ENCODE measurements at regions of chr4 and their contacts with region 1.

Region 1: GRCh38 chr4:52861879-52862616 is at the start of gene RASL11B:
- DNase-seq: peak; percentile 91
- ATAC-seq: peak; percentile 99
- H3K4me3 Mint-ChIP-seq: peak within 1 kb of the TSS; percentile 82
- H3K27ac Mint-ChIP-seq: no peak within 1 kb of the TSS
- H3K4me1 Mint-ChIP-seq: peaks cover 16% of the 10 kb centered on the region
- H3K27me3 Mint-ChIP-seq: peaks cover 38% of the 10 kb centered on the region
- CTCF ChIP-seq: no peak
- total RNA-seq, gene RASL11B: 0.69 TPM in 1 of 2 replicates, not detected in the other

Region 2: DNA sequence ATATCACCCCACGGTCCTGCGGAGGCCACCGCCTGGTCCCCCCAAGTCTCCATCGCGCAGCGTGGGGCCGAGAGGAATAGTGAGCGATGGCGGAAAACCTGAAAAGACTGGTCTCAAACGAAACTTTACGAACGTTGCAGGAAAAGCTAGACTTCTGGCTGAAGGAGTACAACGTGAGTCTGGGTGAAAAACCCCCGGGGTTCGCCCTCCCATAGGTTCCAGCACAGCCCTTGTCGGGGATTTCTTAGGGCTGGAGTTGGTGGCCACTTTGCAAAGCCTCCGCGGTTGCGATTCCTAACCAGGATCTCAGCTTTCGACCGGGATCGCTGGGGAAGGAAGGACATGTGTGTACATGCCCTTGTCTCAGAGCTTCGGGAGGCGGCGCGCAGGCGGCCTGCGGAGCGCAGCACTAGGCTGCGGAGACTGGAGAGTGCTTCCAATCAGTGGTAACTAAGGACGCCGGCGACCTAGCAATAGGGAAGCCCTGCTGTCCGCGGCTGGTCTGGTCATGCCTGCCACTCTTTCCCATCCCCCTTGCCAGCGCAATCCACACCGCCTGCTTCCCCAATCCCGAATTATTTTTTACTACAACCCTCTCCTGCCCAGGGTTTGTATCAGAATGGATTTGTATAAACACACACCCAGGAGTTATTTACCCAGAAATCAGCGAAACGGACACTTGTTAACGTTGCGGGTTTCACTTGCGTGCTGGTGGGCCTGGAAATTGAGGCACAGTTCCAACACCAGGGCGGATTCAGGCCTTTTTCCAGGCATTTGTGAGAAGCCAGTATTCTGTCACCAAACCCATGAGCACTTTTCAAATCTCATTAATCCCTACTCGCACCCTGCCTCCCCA is 810.2 kb before region 1 on chr4:
- CTCF ChIA-PET with region 1: no interaction called
- POLR2A ChIA-PET with region 1: no interaction called
- intact Hi-C with region 1: loop called (anchors 5 kb)
- DNase-seq: peak; percentile 31
- ATAC-seq: peak; percentile 43
- H3K4me3 Mint-ChIP-seq: peak overlapping the region; percentile 88
- H3K27ac Mint-ChIP-seq: peak overlapping the region; percentile 51
- H3K4me1 Mint-ChIP-seq: peaks cover 26% of the 10 kb centered on the region
- H3K27me3 Mint-ChIP-seq: peaks cover 36% of the 10 kb centered on the region
- CTCF ChIP-seq: no peak

Region 3: GRCh38 chr4:52659001-52659721 is 202.9 kb before region 1 on chr4 and contains the start of gene USP46:
- CTCF ChIA-PET with region 1: no interaction called
- POLR2A ChIA-PET with region 1: no interaction called
- intact Hi-C with region 1: loop called (anchors 2 kb)
- DNase-seq: peak; percentile 62
- ATAC-seq: peak; percentile 87
- H3K4me3 Mint-ChIP-seq: peak within 1 kb of the TSS; percentile 88
- H3K27ac Mint-ChIP-seq: peak within 1 kb of the TSS; percentile 76
- H3K4me1 Mint-ChIP-seq: peaks cover 19% of the 10 kb centered on the region
- H3K27me3 Mint-ChIP-seq: no peaks in the 10 kb centered on the region
- CTCF ChIP-seq: no peak
- total RNA-seq, gene USP46: 12.6 and 13.3 TPM in 2 replicates

Region 4: DNA sequence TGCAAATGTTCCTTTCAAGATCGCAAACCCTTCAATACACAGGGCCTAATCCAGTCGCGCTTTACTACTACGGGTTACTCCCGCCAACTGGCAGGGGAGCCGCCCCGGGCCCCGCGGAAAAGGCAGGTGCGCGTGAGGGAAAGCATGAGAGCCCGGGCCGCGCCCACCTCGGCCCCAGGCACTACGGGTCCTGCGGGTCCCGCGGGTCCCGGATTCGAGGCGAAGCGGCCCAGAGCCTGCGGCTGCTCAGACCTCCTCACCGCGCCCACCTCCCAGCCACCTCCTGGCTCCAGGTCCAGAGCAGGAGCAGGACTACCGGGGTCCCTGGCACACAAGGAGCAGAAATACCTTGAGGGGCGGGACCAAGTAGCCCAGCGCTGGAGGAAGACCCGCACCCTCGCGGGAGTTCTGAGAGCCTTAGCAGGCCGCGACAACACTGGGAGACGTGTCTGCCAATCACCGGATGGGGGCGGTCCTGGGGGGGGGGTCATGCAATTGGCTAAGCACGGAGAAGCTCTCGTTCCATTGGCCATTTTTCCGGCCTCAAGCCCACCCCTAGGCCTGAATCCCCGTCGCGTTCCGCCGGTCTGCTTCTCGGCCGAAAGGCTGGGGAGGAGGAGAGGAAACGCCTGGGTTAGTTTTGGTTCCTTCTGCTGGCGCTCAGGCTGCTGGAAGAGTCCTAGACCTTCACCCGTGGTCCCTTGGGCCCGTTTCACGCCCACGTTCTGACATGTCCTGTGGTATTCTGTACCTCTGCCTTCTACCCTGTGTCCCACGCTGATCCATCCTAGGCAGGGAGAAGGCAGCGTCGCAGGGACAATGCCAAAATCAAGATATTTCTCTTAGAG is 139.9 kb before region 1 on chr4:
- CTCF ChIA-PET with region 1: no interaction called
- POLR2A ChIA-PET with region 1: no interaction called
- intact Hi-C with region 1: loop called (anchors 2 kb)
- DNase-seq: peak; percentile 75
- ATAC-seq: peak; percentile 91
- H3K4me3 Mint-ChIP-seq: peak overlapping the region; percentile 84
- H3K27ac Mint-ChIP-seq: peak overlapping the region; percentile 85
- H3K4me1 Mint-ChIP-seq: peaks cover 15% of the 10 kb centered on the region
- H3K27me3 Mint-ChIP-seq: no peaks in the 10 kb centered on the region
- CTCF ChIP-seq: no peak

Region 5: DNA sequence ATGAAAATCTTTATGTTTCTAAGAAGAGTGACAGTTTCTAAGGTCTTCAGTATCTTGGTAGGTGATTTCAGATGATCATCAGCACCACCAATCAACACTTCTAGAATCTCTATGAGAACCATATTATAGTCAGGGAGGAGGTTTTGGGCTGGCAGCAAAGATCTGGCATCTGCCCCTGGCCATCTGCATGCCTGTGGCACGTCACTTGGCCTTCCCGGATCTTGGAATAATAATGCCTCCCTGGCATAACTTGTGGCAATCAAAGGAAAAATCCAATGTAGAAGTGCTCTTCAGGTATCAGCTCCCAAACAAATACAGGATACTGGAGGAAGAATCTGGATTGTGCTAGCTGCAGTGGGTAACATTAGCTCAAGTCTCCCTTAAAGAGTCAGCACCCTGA is 57.4 kb after region 1 on chr4:
- CTCF ChIA-PET with region 1: no interaction called
- POLR2A ChIA-PET with region 1: no interaction called
- intact Hi-C with region 1: no loop called
- DNase-seq: no peak
- ATAC-seq: no peak
- H3K4me3 Mint-ChIP-seq: no peak overlapping the region
- H3K27ac Mint-ChIP-seq: no peak overlapping the region
- H3K4me1 Mint-ChIP-seq: no peaks in the 10 kb centered on the region
- H3K27me3 Mint-ChIP-seq: no peaks in the 10 kb centered on the region
- CTCF ChIP-seq: no peak

Region 6: GRCh38 chr4:52932591-52933470 is 70.8 kb after region 1 on chr4:
- CTCF ChIA-PET with region 1: no interaction called
- POLR2A ChIA-PET with region 1: no interaction called
- intact Hi-C with region 1: no loop called
- DNase-seq: no peak
- ATAC-seq: no peak
- H3K4me3 Mint-ChIP-seq: no peak overlapping the region
- H3K27ac Mint-ChIP-seq: no peak overlapping the region
- H3K4me1 Mint-ChIP-seq: no peaks in the 10 kb centered on the region
- H3K27me3 Mint-ChIP-seq: no peaks in the 10 kb centered on the region
- CTCF ChIP-seq: no peak

Region 7: DNA sequence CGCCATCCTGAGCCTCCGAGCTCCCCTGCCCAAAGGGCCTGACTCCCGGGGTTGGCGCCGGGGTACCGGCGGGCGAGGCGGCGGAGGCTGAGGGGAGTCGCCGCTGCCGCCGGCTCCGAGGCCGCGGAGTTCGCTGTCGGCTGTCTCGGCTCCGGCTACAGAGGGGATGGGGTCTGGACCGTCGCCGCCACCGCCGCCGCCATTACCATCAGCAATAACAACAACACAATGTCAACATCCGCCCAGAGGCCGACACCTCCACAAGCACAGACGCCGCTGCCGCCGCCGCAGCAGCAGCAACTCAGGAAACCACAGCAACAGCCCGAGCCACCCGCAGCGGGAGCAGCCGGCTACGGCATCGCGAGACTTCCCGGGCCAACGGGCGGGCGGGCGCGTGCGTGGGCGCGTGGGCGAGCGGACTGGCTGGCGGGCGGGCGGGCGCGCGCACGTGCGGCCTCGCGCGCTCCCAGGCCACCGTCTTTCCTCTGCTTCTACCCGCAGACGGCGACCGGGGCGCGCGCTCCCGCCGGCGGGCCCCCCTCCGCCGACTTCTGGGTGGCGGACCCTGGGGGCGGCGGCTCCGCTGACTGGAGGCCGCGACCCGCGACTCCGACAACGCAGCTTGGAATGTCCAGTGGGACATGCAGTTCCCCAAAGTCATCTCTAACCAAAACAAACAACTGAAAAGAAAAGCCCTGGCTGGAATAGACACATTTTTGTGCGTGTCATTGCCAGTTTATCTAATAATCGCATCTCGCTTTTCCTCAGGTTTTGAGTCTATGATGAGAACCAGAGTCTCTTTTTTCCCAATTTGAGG is 1202.5 kb after region 1 on chr4 and contains the start of gene CHIC2:
- CTCF ChIA-PET with region 1: no interaction called
- POLR2A ChIA-PET with region 1: no interaction called
- intact Hi-C with region 1: loop called (anchors 10 kb)
- DNase-seq: peak; percentile 95
- ATAC-seq: peak; percentile 90
- H3K4me3 Mint-ChIP-seq: peak within 1 kb of the TSS; percentile 92
- H3K27ac Mint-ChIP-seq: peak within 1 kb of the TSS; percentile 87
- H3K4me1 Mint-ChIP-seq: peaks cover 47% of the 10 kb centered on the region
- H3K27me3 Mint-ChIP-seq: peaks cover 3% of the 10 kb centered on the region
- CTCF ChIP-seq: no peak
- total RNA-seq, gene CHIC2: 17.5 and 21.6 TPM in 2 replicates

Measured in activated B cell treated with CpG ODN at 0.5 μM for 24 hours (primary cell).